ENCODE measurements at regions of chr21 and their contacts with region 1.

Region 1: GRCh38 chr21:25895565-25896205 is 160.9 kb downstream of the GABPA start:
- DNase-seq: no peak
- ATAC-seq: peak in 3 of 4 donors; percentile 74 to 85 (median 83)
- H3K4me3 ChIP-seq: no peak overlapping the region
- H3K27ac ChIP-seq: no peak overlapping the region
- H3K4me1 ChIP-seq: peaks cover 0 to 25% (median 7%) of the 10 kb centered on the region in 12 donors
- H3K27me3 ChIP-seq: no peaks in the 10 kb centered on the region
- CTCF ChIP-seq: peak; percentile 47 to 76 (median 64)
- POLR2A ChIP-seq: no peak

Region 2: GRCh38 chr21:25801217-25802014 is 94.3 kb before region 1 on chr21:
- intact Hi-C with region 1: no loop called
- DNase-seq: peak; percentile 77 to 87 (median 83)
- ATAC-seq: peak; percentile 80 to 97 (median 94)
- H3K4me3 ChIP-seq: no peak overlapping the region
- H3K27ac ChIP-seq: no peak overlapping the region
- H3K4me1 ChIP-seq: peaks cover 0 to 10% (median 0%) of the 10 kb centered on the region in 12 donors
- H3K27me3 ChIP-seq: peaks cover 0 to 7% (median 0%) of the 10 kb centered on the region in 9 donors
- CTCF ChIP-seq: peak; percentile 90 to 99 (median 96)
- POLR2A ChIP-seq: no peak

Region 3: DNA sequence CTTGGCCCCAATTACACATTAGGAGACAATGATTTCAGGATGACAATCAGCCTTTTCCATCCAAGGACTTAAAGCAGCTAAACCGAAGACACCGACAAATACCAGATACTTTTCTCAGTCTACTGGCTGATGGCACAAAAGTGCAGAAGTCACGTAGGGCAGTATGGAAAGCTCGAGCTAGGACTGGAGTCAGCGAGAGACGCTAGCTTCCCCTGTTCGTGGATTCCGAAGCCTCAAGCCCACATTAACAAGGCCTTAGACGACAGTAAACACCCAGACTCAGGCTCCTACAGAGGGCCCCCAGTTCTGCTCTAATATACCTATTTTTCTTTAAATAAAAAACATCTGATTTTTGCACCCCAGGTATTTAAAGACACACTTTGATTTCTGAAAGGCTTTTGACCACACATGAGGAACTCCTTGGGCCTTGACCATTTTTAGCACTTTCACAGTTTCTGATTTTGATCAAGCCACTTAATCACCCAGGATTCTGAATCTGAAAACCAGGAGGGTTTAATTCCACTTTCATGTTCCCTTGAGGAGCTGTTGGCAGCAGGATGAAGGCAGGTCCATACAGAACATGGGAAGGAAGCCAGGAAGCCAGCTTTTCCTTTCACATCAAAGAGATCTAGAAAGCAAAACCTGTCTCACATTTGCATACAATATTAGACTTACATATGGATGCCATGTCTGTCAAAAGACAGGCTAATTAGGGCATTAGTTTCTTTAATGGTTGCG is 43.1 kb after region 1 on chr21:
- intact Hi-C with region 1: no loop called
- DNase-seq: peak in 1 of 5 donors; percentile 14
- ATAC-seq: no peak
- H3K4me3 ChIP-seq: no peak overlapping the region
- H3K27ac ChIP-seq: peak overlapping the region in 5 of 12 donors; percentile 5 to 40 (median 10)
- H3K4me1 ChIP-seq: peaks cover 3 to 66% (median 29%) of the 10 kb centered on the region in 12 donors
- H3K27me3 ChIP-seq: no peaks in the 10 kb centered on the region
- CTCF ChIP-seq: no peak
- POLR2A ChIP-seq: no peak

Region 4: GRCh38 chr21:25997788-25998611 is 102.3 kb after region 1 on chr21:
- intact Hi-C with region 1: loop called in 2 of 10 experiments (anchors 10 kb)
- DNase-seq: no peak
- ATAC-seq: peak in 2 of 4 donors; percentile 23 to 60
- H3K4me3 ChIP-seq: no peak overlapping the region
- H3K27ac ChIP-seq: peak overlapping the region in 2 of 12 donors; percentile 2 to 11
- H3K4me1 ChIP-seq: peaks cover 0 to 32% (median 3%) of the 10 kb centered on the region in 12 donors
- H3K27me3 ChIP-seq: no peaks in the 10 kb centered on the region
- CTCF ChIP-seq: no peak
- POLR2A ChIP-seq: no peak

Measured in heart left ventricle (tissue), 16 donors.